OCI-LY7 (cell line): ENCODE measurements at regions of chr2 and their contacts with region 1.

Region 1: GRCh38 chr2:238106686-238107524 is 6.8 kb downstream of the ESPNL start:
- DNase-seq: peak; percentile 75
- H3K4me3 ChIP-seq: peak overlapping the region; percentile 66
- H3K27ac ChIP-seq: peak overlapping the region; percentile 88
- H3K4me1 ChIP-seq: peaks cover 48% of the 10 kb centered on the region
- CTCF ChIP-seq: peak; percentile 74

Region 2: DNA sequence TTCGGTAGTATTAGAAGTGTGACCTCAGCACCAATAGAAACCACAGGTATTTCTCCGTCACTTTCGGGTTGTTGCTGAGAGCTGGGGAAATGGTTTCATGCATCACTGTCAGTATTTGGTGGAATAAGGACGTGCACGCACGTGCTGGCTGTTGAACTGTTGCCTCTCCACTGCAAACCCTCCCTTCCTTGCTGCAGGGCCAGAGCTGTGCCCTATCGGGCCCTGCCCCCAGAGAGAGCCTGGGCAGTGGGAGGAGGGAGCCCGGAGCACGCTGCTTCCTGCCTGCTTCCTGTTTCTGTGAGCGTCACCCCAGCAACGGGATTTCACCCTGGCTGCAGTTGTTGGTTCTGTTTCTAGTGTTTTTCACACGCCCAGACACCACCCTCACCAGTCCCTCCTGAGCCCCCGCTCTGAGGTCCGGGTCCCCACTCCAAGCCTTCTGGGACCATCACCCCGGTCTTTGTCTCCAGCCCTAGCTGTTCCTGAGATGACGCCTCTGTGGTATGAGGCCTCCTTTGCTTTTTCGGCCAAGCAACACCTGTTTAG is 432.1 kb before region 1 on chr2:
- CTCF ChIA-PET with region 1: no interaction called
- POLR2A ChIA-PET with region 1: no interaction called
- intact Hi-C with region 1: loop called (anchors 5 kb)
- DNase-seq: peak; percentile 86
- H3K4me3 ChIP-seq: peak overlapping the region; percentile 65
- H3K27ac ChIP-seq: peak overlapping the region; percentile 97
- H3K4me1 ChIP-seq: peaks cover 86% of the 10 kb centered on the region
- CTCF ChIP-seq: no peak

Region 3: DNA sequence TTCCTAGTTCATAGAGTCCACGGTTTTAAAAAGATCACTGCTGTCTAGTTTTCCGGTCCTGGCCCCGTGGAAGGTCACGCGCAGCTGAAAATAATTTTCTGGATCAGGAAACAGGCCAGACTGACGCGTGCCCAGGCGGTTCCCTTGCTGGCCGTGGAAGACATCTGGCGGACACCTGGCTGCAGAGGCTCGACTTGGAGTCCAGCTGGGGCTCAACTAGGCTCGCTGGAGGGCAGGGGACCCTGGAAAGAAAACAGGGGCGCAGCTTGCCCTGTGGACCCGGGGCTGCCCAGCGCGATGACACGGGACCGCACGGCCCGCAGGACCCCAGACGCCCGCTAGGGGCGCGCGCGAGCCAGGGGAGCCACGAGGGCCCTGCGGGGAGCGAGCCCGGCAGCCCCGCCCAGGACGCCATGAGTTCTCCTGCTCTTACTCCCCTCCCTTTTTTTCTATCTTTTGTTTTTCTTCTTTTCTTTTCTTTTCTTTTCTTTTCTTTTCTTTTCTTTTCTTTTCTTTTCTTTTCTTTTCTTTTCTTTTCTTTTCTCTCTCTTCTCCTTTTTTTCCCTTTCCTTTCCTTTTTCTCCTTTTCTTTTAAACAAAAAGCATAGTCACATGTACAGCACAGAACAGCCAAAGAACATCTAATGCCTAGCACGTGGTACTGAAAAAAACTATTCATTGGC is 183.3 kb before region 1 on chr2:
- CTCF ChIA-PET with region 1: no interaction called
- POLR2A ChIA-PET with region 1: no interaction called
- intact Hi-C with region 1: loop called (anchors 1 kb)
- DNase-seq: peak; percentile 74
- H3K4me3 ChIP-seq: no peak overlapping the region
- H3K27ac ChIP-seq: no peak overlapping the region
- H3K4me1 ChIP-seq: peaks cover 11% of the 10 kb centered on the region
- CTCF ChIP-seq: peak; percentile 94

Region 4: GRCh38 chr2:238060542-238061314 is 46.2 kb before region 1 on chr2 and contains the start of gene SCLY:
- CTCF ChIA-PET with region 1: no interaction called
- POLR2A ChIA-PET with region 1: no interaction called
- intact Hi-C with region 1: loop called (anchors 1 kb)
- DNase-seq: peak; percentile 97
- H3K4me3 ChIP-seq: peak within 1 kb of the TSS; percentile 79
- H3K27ac ChIP-seq: peak within 1 kb of the TSS; percentile 34
- H3K4me1 ChIP-seq: peaks cover 30% of the 10 kb centered on the region
- CTCF ChIP-seq: no peak
- total RNA-seq, gene SCLY: 39.3 and 41.7 TPM in 2 replicates

Region 5: DNA sequence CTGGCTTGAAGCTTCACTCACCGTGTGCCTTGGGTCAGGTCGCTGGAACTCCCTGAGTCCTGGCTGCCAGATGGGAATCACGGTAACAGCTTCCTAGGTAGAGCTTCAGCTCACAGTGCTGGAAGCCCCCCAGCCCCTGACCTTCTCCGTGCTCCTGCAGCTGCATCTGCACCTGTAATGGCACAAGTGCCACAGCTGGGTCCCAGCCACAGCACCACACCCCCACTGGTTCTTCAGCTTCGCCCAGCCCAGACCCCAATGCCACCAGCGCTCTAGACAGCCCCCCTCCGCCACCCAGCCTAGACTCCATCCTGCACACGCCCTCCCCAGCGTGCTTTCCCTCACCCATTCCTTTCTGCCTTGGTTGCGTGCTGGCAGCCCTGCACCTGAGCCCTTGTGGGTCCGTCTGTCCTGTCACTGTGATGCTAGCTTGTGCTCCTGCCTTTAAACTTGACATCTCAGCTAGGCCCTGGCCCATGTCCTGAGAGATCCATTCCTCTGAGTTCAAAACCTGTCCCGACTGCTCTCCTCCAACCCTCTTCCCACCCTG is 14.3 kb before region 1 on chr2:
- CTCF ChIA-PET with region 1: no interaction called
- POLR2A ChIA-PET with region 1: no interaction called
- intact Hi-C with region 1: no loop called
- DNase-seq: no peak
- H3K4me3 ChIP-seq: no peak overlapping the region
- H3K27ac ChIP-seq: no peak overlapping the region
- H3K4me1 ChIP-seq: peaks cover 1% of the 10 kb centered on the region
- CTCF ChIP-seq: no peak

Region 6: DNA sequence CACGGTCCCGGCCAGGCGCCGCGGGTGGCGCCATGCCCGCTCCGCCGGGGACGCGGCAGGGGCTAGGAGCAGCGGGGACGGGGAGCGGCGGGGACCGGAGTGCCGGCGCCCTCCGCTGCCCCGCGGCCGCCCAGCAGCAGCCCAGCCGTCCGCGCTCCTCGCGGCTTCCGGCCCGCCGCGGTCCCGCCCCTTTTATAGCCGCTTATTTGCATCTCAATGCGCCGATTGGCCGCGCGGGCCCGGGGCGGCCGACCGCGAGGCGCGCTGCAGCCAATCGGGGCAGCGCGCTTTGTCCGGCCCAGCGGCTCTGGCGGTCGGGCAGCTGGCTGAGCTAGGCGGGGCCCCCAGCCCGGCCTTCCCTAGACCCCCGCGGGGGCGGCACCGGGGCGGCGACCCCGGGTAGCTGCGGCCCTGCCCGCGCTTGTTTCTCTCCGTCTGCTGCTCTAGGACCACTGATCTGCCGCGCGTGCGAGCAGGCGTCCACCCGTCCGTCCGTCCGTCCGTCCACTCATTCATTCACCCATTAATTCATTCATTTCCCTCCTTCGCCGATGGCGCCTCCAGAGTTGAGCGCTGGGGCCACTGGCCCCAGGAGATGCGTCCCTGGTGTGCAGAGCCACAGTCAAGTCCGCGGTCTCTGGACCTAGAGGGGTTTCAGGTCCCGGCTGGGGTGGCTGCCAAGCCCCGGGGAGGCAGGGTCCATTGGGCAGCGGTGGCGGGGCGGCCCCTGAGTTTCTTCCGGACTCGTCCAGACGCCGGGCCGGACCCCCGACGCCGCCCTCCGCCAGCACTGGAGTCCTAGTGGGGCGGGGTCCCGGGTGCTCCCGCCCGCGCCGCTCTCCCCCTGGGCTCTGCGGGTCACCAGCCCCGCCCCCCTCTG is 133.2 kb after region 1 on chr2 and contains the start of gene HES6:
- CTCF ChIA-PET with region 1: no interaction called
- POLR2A ChIA-PET with region 1: interaction called, 3 read pairs
- intact Hi-C with region 1: loop called (anchors 5 kb)
- DNase-seq: peak; percentile 89
- H3K4me3 ChIP-seq: peak within 1 kb of the TSS; percentile 72
- H3K27ac ChIP-seq: no peak within 1 kb of the TSS
- H3K4me1 ChIP-seq: peaks cover 6% of the 10 kb centered on the region
- CTCF ChIP-seq: no peak
- total RNA-seq, gene HES6: 13.1 and 20.5 TPM in 2 replicates

Region 7: DNA sequence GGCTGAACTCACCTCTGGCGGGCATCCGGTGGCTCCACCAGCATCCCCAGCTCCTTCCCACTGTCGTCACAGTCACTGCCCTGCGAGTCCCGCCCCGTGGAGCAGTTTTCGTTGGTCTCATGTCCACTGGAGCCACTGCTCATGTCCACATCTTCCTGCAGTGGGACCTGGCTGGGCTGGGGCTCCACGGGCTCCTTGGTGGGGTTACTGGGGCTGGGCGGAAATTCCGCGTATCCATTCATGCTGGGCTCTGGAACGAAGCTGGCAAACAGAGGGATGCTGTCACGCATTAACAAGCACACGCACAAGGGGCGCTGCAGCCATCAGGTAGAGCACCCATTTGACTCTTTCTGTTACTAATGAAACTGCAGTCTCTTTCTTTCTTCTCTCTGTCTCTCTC is 170.8 kb after region 1 on chr2:
- CTCF ChIA-PET with region 1: no interaction called
- POLR2A ChIA-PET with region 1: no interaction called
- intact Hi-C with region 1: no loop called
- DNase-seq: no peak
- H3K4me3 ChIP-seq: no peak overlapping the region
- H3K27ac ChIP-seq: no peak overlapping the region
- H3K4me1 ChIP-seq: peaks cover 7% of the 10 kb centered on the region
- CTCF ChIP-seq: no peak

Region 8: DNA sequence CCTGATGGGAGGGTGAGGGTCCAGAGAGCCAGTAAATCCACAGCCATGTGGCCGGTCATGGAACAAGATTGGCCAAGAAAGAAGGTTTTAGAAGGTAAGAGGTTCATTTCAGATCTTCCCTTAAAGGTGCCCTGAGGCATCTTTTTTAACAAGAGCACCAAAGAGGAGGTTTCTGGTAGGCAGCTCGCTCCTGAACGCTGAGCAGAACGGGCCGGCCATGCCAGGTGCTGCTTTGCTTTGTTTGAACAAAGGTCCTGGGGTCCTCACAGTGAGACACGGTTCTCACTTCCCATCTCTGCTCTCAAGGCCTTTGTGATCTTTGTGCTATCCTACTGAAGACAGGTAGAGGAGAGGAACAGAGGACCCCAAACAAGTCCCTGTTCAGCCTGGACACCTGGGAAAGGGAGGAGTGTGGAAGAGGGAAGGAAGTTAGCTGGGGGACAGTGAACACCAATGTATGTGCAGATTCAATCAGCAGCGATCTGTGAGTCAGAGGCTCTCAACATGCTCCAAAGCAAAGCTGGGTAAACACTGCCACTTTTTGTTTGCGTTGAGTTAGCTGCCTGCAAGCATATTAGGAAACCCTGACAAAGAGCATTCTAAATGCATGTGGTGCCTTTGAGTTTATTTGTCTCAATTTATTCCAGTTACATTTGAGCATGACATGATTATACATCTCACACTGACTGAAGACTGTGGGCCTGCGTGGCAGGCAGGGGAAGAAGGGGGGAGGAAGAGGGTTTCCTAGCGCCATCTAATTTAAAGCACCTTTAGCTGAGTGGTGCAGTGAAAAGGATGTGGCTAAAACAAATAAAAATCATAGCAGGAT is 422.3 kb after region 1 on chr2:
- CTCF ChIA-PET with region 1: no interaction called
- POLR2A ChIA-PET with region 1: no interaction called
- intact Hi-C with region 1: no loop called
- DNase-seq: no peak
- H3K4me3 ChIP-seq: no peak overlapping the region
- H3K27ac ChIP-seq: no peak overlapping the region
- H3K4me1 ChIP-seq: no peaks in the 10 kb centered on the region
- CTCF ChIP-seq: no peak